ENCODE measurements at regions of chr15 and their contacts with region 1.

Region 1: DNA sequence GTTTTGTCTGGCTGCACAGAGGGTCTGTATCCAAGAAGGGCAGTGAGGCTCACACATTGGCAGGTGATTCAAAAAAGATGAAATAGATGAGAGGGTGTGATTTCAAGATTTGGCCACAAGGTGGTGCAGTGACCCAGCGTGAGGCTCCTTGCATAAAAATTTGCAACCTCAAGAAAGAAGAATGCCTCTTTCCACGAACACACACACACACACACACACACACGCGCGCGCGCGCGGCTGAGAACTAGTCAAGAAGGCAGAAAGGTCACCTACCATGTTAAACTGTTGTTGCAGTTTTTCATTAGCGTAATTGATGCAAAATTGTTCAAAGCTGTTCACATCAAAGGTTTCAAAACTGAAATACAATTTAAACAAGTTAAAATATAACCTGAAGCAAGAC is 39.2 kb downstream of the MYO5C start:
- DNase-seq: peak; percentile 87
- H3K4me3 Mint-ChIP-seq: peak overlapping the region; percentile 52
- H3K27ac Mint-ChIP-seq: no peak overlapping the region
- H3K4me1 Mint-ChIP-seq: peaks cover 18% of the 10 kb centered on the region
- H3K27me3 Mint-ChIP-seq: no peaks in the 10 kb centered on the region

Region 2: GRCh38 chr15:52234596-52235541 is 21.5 kb before region 1 on chr15:
- CTCF ChIA-PET with region 1: interaction called, 10 read pairs
- intact Hi-C with region 1: loop called (anchors 2 kb)
- DNase-seq: peak; percentile 69
- H3K4me3 Mint-ChIP-seq: peak overlapping the region; percentile 24
- H3K27ac Mint-ChIP-seq: peak overlapping the region; percentile 79
- H3K4me1 Mint-ChIP-seq: peaks cover 43% of the 10 kb centered on the region
- H3K27me3 Mint-ChIP-seq: no peaks in the 10 kb centered on the region

Region 3: DNA sequence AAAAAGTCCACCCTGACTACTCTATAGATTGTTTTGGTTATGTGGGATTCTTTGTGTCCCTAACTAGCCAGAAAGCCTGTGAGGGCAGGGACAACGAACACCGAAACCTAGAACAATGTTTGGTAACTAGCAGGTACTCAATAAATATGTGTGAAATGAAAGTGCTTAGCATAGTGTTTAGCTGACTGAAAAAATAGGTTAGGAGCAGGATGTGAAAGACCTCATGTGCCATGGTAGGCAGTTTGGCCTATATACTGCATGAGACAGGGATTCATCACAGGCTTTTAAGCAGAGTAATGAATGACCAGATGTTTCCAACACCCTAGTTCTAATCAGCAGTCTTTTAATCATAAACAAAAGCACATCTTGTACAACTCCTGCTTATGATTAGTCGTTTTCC is 208.1 kb after region 1 on chr15:
- CTCF ChIA-PET with region 1: no interaction called
- intact Hi-C with region 1: loop called (anchors 1 kb)
- DNase-seq: peak; percentile 20
- H3K4me3 Mint-ChIP-seq: no peak overlapping the region
- H3K27ac Mint-ChIP-seq: peak overlapping the region; percentile 43
- H3K4me1 Mint-ChIP-seq: peaks cover 31% of the 10 kb centered on the region
- H3K27me3 Mint-ChIP-seq: no peaks in the 10 kb centered on the region

Region 4: GRCh38 chr15:52568601-52569256 is 312.4 kb after region 1 on chr15 and contains the start of gene ARPP19:
- CTCF ChIA-PET with region 1: no interaction called
- intact Hi-C with region 1: loop called (anchors 1 kb)
- DNase-seq: peak; percentile 90
- H3K4me3 Mint-ChIP-seq: peak within 1 kb of the TSS; percentile 86
- H3K27ac Mint-ChIP-seq: peak within 1 kb of the TSS; percentile 98
- H3K4me1 Mint-ChIP-seq: peaks cover 23% of the 10 kb centered on the region
- H3K27me3 Mint-ChIP-seq: no peaks in the 10 kb centered on the region
- total RNA-seq, gene ARPP19: 130 to 144 TPM

Region 5: DNA sequence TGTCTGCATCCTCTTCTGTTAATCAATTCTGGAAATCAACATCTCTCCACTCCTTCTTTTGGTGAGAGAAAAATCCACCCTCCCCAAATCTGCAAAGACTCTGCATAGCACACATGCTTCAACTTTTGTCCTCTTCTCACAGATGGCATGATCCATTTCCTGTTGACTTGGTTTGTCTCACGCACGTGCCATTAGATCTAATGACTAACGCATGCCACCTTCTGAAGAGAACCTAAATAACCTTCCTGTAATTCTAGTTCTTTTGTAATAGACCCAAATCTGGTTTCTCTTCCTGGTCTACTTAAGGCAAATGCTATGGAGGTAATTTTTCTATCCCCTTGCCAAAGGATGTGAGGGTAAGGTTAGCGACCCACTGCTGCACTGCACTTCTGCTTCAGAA is 473.8 kb after region 1 on chr15:
- CTCF ChIA-PET with region 1: interaction called, 48 read pairs
- intact Hi-C with region 1: loop called (anchors 1 kb)
- DNase-seq: peak; percentile 73
- H3K4me3 Mint-ChIP-seq: no peak overlapping the region
- H3K27ac Mint-ChIP-seq: peak overlapping the region; percentile 57
- H3K4me1 Mint-ChIP-seq: peaks cover 38% of the 10 kb centered on the region
- H3K27me3 Mint-ChIP-seq: no peaks in the 10 kb centered on the region

Measured in activated naive CD4-positive, alpha-beta T cell treated with anti-CD3 and anti-CD28 coated beads for 36 hours (primary cell).